Psoas muscle (tissue), 8 donors: ENCODE measurements at regions of chr9 and their contacts with region 1.

Region 1: DNA sequence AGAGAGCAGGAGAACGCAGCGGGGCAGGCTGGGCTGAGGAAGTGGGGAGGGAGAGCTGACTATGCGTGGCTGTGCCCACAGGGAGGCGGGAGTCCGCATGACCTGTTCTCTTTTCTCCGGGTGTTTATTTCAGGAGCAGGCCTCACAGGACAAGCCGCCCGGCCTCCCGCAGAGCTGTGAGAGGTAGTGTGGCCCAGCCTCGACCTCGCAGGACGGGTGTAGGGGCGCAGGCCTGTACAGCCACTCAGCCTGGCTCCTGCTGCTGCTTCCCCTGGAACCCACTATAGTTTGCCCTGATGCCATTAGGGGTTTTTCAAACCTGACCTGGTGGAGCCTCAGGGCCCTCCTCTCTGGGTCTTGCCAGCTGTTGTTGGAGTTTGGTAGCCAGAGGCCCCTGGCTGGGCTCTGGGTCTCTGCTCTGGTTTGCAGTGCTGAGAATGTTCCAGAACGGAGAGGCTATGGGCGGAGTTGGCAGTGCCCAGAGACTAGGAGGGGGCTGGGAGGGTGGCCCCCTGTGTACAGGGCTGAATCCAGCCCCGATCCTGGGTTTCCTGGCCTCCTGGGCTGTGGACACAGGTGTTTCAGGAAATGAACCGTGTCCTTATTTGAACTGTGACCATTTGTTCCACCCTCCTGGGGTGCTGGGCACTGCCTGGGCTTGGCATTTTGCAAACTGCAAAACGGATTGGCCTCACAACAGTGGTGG is 78.8 kb downstream of the WNK2 start:
- DNase-seq: peak in 1 of 2 donors; percentile 69
- ATAC-seq: peak; percentile 63 to 88 (median 84)
- H3K4me3 ChIP-seq: no peak overlapping the region
- H3K27ac ChIP-seq: peak overlapping the region; percentile 44
- H3K4me1 ChIP-seq: peaks cover 9% of the 10 kb centered on the region
- H3K27me3 ChIP-seq: no peaks in the 10 kb centered on the region
- CTCF ChIP-seq: no peak

Region 2: DNA sequence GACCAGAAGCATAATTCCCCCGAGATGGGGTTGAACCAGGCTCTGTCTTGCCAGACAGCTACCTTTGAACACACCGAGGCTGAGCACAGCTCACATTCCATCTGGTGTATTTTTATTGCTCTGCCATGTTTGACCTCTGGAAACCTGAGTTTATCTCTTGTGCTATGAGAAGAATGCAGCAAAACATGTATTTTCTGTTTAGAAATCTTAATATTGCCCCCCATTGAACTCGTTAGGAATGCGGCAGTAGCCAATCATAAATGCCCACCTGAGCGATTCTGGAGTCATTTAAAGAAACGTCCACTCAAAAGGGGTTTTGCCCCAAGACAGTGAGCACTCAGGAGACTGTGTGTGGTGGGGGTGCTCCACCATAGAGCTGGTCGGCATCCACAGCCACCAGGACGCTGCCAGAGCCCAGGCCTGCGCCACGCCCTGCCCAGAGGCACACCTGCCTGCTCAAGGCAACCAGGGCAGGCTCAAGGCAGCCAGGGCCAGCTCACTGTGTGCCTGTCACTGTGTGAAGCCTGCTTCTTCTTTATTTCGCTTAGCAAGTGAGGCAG is 288.5 kb before region 1 on chr9:
- intact Hi-C with region 1: no loop called
- DNase-seq: no peak
- ATAC-seq: no peak
- H3K4me3 ChIP-seq: no peak overlapping the region
- H3K27ac ChIP-seq: no peak overlapping the region
- H3K4me1 ChIP-seq: no peaks in the 10 kb centered on the region
- H3K27me3 ChIP-seq: no peaks in the 10 kb centered on the region
- CTCF ChIP-seq: no peak

Region 3: GRCh38 chr9:93193148-93193755 is 69.4 kb before region 1 on chr9:
- intact Hi-C with region 1: no loop called
- DNase-seq: peak in 1 of 2 donors; percentile 44
- ATAC-seq: no peak
- H3K4me3 ChIP-seq: no peak overlapping the region
- H3K27ac ChIP-seq: no peak overlapping the region
- H3K4me1 ChIP-seq: peaks cover 22% of the 10 kb centered on the region
- H3K27me3 ChIP-seq: no peaks in the 10 kb centered on the region
- CTCF ChIP-seq: no peak

Region 4: GRCh38 chr9:93332324-93332836 is 69.7 kb after region 1 on chr9:
- intact Hi-C with region 1: loop called in 1 of 2 experiments (anchors 2 kb)
- DNase-seq: no peak
- ATAC-seq: no peak
- H3K4me3 ChIP-seq: no peak overlapping the region
- H3K27ac ChIP-seq: no peak overlapping the region
- H3K4me1 ChIP-seq: no peaks in the 10 kb centered on the region
- H3K27me3 ChIP-seq: peaks cover 0 to 2% (median 0%) of the 10 kb centered on the region in 3 donors
- CTCF ChIP-seq: no peak